ENCODE measurements at regions of chr9 and their contacts with region 1.

Region 1: DNA sequence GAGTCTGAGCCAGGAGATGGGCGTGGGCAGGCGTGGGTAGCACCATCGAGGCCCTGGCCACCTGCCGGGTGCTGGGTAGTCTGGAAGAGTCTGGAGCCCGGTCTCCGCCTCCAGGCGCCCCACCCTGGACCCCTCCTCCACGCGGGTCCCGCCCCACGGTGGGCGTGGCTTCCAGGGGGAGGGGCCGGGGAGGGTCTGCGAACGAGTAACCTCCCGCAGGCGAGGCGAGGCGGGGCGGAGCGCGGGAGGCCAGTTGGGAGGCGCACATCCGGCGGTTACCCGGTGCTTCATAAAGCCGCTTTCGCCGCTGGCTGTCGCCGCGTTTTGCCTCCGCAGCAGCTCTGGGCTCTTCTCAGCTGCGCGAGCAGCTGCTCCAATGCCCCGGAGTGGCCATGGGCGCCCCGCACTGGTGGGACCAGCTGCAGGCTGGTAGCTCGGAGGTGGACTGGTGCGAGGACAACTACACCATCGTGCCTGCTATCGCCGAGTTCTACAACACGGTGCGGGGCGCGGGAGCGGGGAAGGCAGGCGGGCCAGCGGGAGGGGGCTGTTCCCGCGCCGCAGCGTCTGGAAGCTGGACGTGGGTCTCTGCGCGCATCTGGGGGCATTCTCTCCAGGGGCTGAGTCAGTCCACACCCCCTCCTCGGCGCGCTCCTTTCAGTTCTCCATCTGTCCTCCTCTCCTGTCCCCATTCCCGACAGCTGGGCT is at the start of gene ACER2:
- DNase-seq: peak; percentile 95
- H3K4me3 Mint-ChIP-seq: peak within 1 kb of the TSS; percentile 97
- H3K27ac Mint-ChIP-seq: peak within 1 kb of the TSS; percentile 27
- H3K4me1 Mint-ChIP-seq: peaks cover 18% of the 10 kb centered on the region
- H3K27me3 Mint-ChIP-seq: peaks cover 10% of the 10 kb centered on the region
- total RNA-seq, gene ACER2: 1.3 and 1.4 TPM in 2 replicates

Region 2: GRCh38 chr9:19127881-19128500 is 280.9 kb before region 1 on chr9:
- intact Hi-C with region 1: loop called (anchors 1 kb)
- DNase-seq: peak; percentile 18
- H3K4me3 Mint-ChIP-seq: peak overlapping the region; percentile 92
- H3K27ac Mint-ChIP-seq: peak overlapping the region; percentile 89
- H3K4me1 Mint-ChIP-seq: peaks cover 53% of the 10 kb centered on the region
- H3K27me3 Mint-ChIP-seq: no peaks in the 10 kb centered on the region

Region 3: DNA sequence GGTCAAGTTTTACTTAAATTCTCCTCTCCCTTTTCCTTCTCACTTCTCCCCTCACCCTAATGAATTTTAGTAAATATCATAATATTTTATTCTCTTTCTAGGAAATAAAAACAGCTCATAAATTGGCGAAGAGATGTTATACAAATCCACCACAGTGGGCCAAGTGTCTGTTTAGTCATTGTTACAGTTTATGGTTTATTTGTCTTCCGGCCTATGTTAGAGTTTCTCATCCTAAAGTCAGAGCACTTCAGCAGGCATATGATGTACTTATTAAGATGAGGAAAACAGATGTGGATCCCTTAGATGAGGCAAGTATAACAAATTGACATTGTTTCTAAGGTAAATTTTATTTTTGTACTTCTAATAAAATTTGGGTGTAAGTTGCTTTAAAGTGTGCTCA is 77.0 kb before region 1 on chr9:
- intact Hi-C with region 1: no loop called
- DNase-seq: no peak
- H3K4me3 Mint-ChIP-seq: no peak overlapping the region
- H3K27ac Mint-ChIP-seq: no peak overlapping the region
- H3K4me1 Mint-ChIP-seq: no peaks in the 10 kb centered on the region
- H3K27me3 Mint-ChIP-seq: no peaks in the 10 kb centered on the region

Region 4: DNA sequence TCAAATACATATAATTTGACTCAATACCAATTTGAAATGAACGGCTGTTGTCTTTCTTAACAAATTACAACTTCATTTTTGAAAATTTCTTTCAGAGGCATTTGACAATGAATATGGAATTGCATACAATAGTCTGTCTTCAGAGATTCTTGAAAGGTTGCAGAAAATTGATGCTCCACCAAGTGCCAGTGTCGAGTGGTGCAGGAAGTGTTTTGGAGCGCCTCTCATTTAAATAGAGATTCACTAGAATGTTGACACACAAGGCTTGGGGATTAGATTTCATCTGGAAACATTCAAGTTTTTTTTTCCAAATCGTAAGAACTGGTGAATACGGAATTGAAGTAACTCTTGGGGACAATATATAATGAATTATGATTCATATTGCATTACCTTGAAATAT is 36.9 kb before region 1 on chr9:
- intact Hi-C with region 1: loop called (anchors 5 kb)
- DNase-seq: no peak
- H3K4me3 Mint-ChIP-seq: no peak overlapping the region
- H3K27ac Mint-ChIP-seq: no peak overlapping the region
- H3K4me1 Mint-ChIP-seq: peaks cover 24% of the 10 kb centered on the region
- H3K27me3 Mint-ChIP-seq: no peaks in the 10 kb centered on the region

Region 5: GRCh38 chr9:19379697-19380046 is 29.2 kb before region 1 on chr9:
- intact Hi-C with region 1: loop called (anchors 1 kb)
- DNase-seq: no peak
- H3K4me3 Mint-ChIP-seq: peak overlapping the region; percentile 98
- H3K27ac Mint-ChIP-seq: peak overlapping the region; percentile 98
- H3K4me1 Mint-ChIP-seq: peaks cover 61% of the 10 kb centered on the region
- H3K27me3 Mint-ChIP-seq: no peaks in the 10 kb centered on the region

Region 6: DNA sequence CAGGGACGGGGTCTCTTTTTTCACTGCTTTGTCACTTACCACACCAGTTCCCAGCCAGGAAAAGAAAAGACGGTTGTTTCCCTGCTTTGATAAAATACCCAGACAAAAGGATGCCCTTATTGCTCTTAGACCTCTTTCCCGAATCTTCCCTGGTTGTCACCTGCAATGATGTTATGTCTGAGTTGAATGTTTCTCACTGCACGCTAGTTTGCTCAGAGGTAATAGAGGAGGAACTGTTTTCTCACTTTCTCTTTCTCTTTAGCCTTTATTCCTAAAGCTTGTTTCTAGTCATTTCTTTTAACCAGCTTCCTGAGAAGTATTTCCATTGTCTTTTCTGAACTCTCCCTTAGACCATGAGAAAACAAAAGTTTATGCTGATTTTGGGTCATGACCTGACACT is 32.9 kb after region 1 on chr9:
- intact Hi-C with region 1: loop called (anchors 2 kb)
- DNase-seq: no peak
- H3K4me3 Mint-ChIP-seq: peak overlapping the region; percentile 48
- H3K27ac Mint-ChIP-seq: peak overlapping the region; percentile 80
- H3K4me1 Mint-ChIP-seq: peaks cover 14% of the 10 kb centered on the region
- H3K27me3 Mint-ChIP-seq: no peaks in the 10 kb centered on the region